ENCODE measurements at regions of chr12 and their contacts with region 1.

Region 1: DNA sequence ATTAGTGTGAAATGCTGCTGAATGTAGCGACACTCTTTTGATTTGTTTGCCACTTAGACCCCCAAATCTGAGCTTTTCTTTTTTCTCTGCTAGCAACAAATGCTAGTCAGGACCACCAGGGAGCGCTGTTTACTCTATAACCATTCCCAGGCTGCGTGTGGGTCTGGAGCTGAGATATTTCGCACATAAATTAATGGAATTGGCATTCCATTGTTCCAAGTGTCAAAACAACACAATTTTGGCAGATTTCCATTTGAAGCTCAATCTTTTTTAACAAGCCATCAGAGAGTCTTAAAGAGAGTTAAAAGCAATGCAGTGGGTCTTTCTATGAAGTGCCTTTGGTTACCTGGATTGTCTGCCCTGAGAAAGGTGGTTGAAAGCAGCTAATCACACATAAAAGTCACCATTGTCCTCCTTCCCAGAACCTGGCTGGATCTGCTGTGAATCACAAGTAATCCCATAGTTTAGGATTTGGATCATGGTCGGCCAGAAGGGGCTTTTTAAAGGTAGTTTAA is 7.4 kb upstream of the TMEM132C start:
- DNase-seq: peak; percentile 56
- ATAC-seq: peak; percentile 40 to 53

Region 2: GRCh38 chr12:128387811-128388422 is 128.3 kb after region 1 on chr12:
- intact Hi-C with region 1: loop called in 1 of 2 experiments (anchors 5 kb)
- DNase-seq: peak; percentile 61
- ATAC-seq: peak; percentile 65 to 82

Region 3: GRCh38 chr12:128976120-128976738 is 716.6 kb after region 1 on chr12:
- intact Hi-C with region 1: no loop called
- DNase-seq: peak; percentile 37
- ATAC-seq: peak in 1 of 2 donors; percentile 19

Region 4: GRCh38 chr12:129911428-129912049 is 1651.9 kb after region 1 on chr12:
- intact Hi-C with region 1: loop called (anchors 2 to 10 kb)
- DNase-seq: peak; percentile 43
- ATAC-seq: peak; percentile 84 to 90

Region 5: GRCh38 chr12:130013771-130014484 is 1754.3 kb after region 1 on chr12:
- intact Hi-C with region 1: loop called in 1 of 2 experiments (anchors 10 kb)
- DNase-seq: no peak
- ATAC-seq: peak; percentile 27 to 61

Measured in left cardiac atrium (tissue), 4 donors.